CD4-positive, alpha-beta memory T cell (primary cell): ENCODE measurements at regions of chr19 and their contacts with region 1.

Region 1: DNA sequence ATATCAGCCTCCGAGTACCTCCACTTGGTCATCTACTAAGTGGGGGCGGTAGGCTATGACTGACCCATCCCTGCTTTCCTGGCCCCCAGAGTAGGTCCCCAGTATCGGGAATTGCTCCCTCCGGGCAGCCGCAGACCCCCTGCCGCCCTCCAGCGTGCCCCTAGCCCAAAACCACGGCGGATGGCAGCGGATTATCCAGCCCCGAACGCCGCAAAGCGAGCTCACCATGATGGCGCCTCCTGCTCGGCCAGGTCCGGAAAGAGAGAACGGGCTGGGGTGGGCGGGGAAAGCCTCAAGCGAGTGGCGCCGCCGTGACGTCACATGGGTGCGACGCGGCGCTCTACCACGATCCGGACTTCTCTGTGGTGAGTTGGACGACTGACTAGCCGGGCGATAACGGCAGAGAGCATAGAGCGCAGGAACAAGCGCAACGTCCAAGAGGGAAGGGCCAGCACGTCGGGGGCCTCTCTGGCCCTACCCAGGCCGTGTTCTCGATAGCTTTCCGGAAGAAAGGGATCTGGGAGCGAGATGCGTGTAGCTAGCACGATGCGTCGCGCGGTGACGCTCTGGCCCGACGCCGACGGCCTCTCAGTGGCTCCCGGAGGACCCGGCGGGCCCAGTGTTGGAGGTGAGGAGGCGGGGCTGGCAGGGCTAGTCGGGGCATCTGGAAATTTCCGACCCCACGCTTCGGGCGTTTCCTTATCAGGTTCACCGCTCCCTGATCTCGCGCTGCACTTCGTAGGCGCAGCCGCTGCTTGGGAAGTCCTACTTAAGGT is at the starts of genes RPL18 and SPHK2:
- DNase-seq: peak; percentile 94 to 97 (median 96)
- H3K4me3 ChIP-seq: peak within 1 kb of the TSS; percentile 76 to 81
- H3K4me3 Mint-ChIP-seq: peak within 1 kb of the TSS; percentile 95 to 98 (median 96)
- H3K27ac ChIP-seq: peak within 1 kb of the TSS; percentile 88
- H3K27ac Mint-ChIP-seq: peak within 1 kb of the TSS; percentile 97 to 99 (median 98)
- H3K4me1 ChIP-seq: peaks cover 50% of the 10 kb centered on the region
- H3K4me1 Mint-ChIP-seq: peaks cover 27 to 74% (median 49%) of the 10 kb centered on the region in 4 donors
- H3K27me3 ChIP-seq: no peaks in the 10 kb centered on the region
- H3K27me3 Mint-ChIP-seq: no peaks in the 10 kb centered on the region
- total RNA-seq, gene RPL18: 2,357 to 2,448 TPM
- total RNA-seq, gene SPHK2: 25.0 to 29.1 TPM

Region 2: GRCh38 chr19:48468775-48469288 is 150.3 kb before region 1 on chr19:
- CTCF ChIA-PET with region 1: no interaction called
- POLR2A ChIA-PET with region 1: interaction called, 3 read pairs
- intact Hi-C with region 1: loop called (anchors 1 kb)
- DNase-seq: peak; percentile 99 to 100 (median 100)
- H3K4me3 ChIP-seq: peak overlapping the region in 1 of 2 donors; percentile 65
- H3K4me3 Mint-ChIP-seq: peak overlapping the region; percentile 89 to 96 (median 92)
- H3K27ac ChIP-seq: peak overlapping the region; percentile 81
- H3K27ac Mint-ChIP-seq: peak overlapping the region; percentile 83 to 98 (median 95)
- H3K4me1 ChIP-seq: peaks cover 18% of the 10 kb centered on the region
- H3K4me1 Mint-ChIP-seq: peaks cover 7 to 24% (median 13%) of the 10 kb centered on the region in 4 donors
- H3K27me3 ChIP-seq: no peaks in the 10 kb centered on the region
- H3K27me3 Mint-ChIP-seq: no peaks in the 10 kb centered on the region

Region 3: GRCh38 chr19:48608798-48609263 is 10.3 kb before region 1 on chr19:
- CTCF ChIA-PET with region 1: interaction called, 14 read pairs
- POLR2A ChIA-PET with region 1: interaction called, 41 read pairs
- intact Hi-C with region 1: no loop called
- DNase-seq: peak; percentile 57 to 63 (median 60)
- H3K4me3 ChIP-seq: no peak overlapping the region
- H3K4me3 Mint-ChIP-seq: peak overlapping the region in 6 of 8 donors; percentile 24 to 73 (median 53)
- H3K27ac ChIP-seq: no peak overlapping the region
- H3K27ac Mint-ChIP-seq: peak overlapping the region in 5 of 7 donors; percentile 22 to 94 (median 73)
- H3K4me1 ChIP-seq: no peaks in the 10 kb centered on the region
- H3K4me1 Mint-ChIP-seq: peaks cover 2 to 6% (median 5%) of the 10 kb centered on the region in 4 donors
- H3K27me3 ChIP-seq: no peaks in the 10 kb centered on the region
- H3K27me3 Mint-ChIP-seq: no peaks in the 10 kb centered on the region

Region 4: GRCh38 chr19:48637170-48637947 is 18.3 kb after region 1 on chr19 and contains the start of gene DBP:
- CTCF ChIA-PET with region 1: interaction called, 5 read pairs
- POLR2A ChIA-PET with region 1: interaction called, 70 read pairs
- intact Hi-C with region 1: loop called (anchors 1 kb)
- DNase-seq: peak in 4 of 5 donors; percentile 99 to 100 (median 100)
- H3K4me3 ChIP-seq: peak within 1 kb of the TSS; percentile 52 to 88
- H3K4me3 Mint-ChIP-seq: peak within 1 kb of the TSS; percentile 89 to 100 (median 99)
- H3K27ac ChIP-seq: peak within 1 kb of the TSS; percentile 88
- H3K27ac Mint-ChIP-seq: peak within 1 kb of the TSS; percentile 93 to 100 (median 99)
- H3K4me1 ChIP-seq: peaks cover 46% of the 10 kb centered on the region
- H3K4me1 Mint-ChIP-seq: peaks cover 20 to 55% (median 40%) of the 10 kb centered on the region in 4 donors
- H3K27me3 ChIP-seq: no peaks in the 10 kb centered on the region
- H3K27me3 Mint-ChIP-seq: no peaks in the 10 kb centered on the region
- total RNA-seq, gene DBP: 62.6 to 69.5 TPM

Region 5: DNA sequence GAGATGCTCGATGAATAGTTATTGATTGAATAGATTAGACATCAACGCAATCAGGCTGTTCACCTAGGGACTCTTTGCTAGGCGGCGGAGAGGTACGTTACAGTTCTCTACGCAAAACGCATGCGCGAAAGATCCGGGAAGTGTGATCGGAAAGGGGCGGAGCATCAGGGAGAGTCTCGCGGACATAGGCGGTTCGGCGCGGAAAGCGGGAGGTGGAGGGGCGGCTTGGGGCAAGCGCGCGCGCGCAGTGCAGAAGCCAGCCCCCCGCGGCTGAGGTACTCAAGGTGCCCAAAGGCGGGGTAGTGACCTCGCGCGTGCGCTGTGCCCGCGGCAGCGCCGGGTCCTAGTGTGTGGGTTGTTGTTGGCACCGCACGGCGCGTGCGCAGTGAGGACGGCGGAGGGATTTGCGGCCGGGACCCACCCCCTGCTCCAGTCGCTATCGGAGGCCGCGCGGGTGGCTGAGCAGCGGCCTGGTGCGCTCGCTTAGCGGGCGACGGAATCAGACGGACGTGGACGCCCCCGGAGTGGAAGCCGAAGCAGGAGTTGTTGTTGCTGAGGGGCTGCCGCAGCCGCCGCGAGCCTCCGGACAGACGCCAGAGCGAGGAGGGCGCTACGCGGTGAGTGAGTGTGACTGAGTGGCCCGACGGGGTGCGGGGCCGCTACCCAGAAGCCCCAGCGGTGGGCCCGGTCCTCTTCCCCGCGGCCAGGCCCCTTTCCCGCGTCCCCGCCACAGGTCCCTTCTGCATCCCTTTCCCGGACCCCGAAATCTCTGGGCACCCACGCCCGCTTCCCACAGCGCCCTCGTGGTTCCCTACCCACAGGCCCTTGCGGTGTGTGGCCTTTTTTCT is 466.1 kb after region 1 on chr19 and contains the start of gene SNRNP70:
- CTCF ChIA-PET with region 1: no interaction called
- POLR2A ChIA-PET with region 1: no interaction called
- intact Hi-C with region 1: loop called (anchors 1 kb)
- DNase-seq: peak; percentile 99 to 100 (median 100)
- H3K4me3 ChIP-seq: peak within 1 kb of the TSS; percentile 72 to 95
- H3K4me3 Mint-ChIP-seq: peak within 1 kb of the TSS; percentile 82 to 96 (median 94)
- H3K27ac ChIP-seq: peak within 1 kb of the TSS; percentile 81
- H3K27ac Mint-ChIP-seq: peak within 1 kb of the TSS; percentile 88 to 98 (median 93)
- H3K4me1 ChIP-seq: peaks cover 32% of the 10 kb centered on the region
- H3K4me1 Mint-ChIP-seq: peaks cover 22 to 46% (median 32%) of the 10 kb centered on the region in 4 donors
- H3K27me3 ChIP-seq: no peaks in the 10 kb centered on the region
- H3K27me3 Mint-ChIP-seq: peaks cover 0 to 3% of the 10 kb centered on the region in 2 donors
- total RNA-seq, gene SNRNP70: 675 to 689 TPM